ENCODE measurements at regions of chr4 and their contacts with region 1.

Region 1: DNA sequence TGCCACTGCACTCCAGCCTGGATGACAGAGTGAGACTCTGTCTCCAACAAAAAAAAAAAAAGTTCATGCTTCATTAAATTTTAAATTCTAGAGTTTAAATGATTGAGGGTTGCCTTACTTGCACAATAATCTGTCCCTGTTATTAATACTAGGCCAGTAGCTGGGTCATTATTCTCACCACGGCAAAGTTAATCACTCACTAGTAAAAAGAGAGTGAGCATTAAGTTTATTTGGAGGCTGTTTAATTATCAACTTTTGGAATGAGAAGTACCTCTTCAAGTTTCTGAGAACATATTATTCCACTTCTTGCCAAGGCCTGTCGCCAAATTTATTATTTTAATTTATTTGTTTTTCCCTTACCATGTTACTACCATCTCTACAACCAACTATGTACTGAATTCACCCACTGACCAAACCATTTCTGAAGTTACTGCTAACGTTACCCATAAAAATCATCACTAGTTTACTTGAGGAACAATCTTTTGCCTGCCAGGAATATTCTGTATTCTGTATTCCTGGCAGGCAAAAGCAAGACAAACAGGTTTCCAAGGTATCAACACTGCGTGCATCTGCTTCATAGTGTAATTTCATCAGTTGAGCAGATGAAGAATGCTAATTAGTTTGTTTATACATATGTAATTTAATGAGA is 26.5 kb downstream of the GUCY1A1 start:
- DNase-seq: no peak
- ATAC-seq: peak in 2 of 8 donors; percentile 10 to 21
- H3K4me3 ChIP-seq: no peak overlapping the region
- H3K27ac ChIP-seq: peak overlapping the region in 8 of 10 donors; percentile 34 to 68 (median 44)
- H3K4me1 ChIP-seq: peaks cover 8 to 86% (median 49%) of the 10 kb centered on the region in 9 donors
- H3K27me3 ChIP-seq: no peaks in the 10 kb centered on the region
- CTCF ChIP-seq: no peak

Region 2: DNA sequence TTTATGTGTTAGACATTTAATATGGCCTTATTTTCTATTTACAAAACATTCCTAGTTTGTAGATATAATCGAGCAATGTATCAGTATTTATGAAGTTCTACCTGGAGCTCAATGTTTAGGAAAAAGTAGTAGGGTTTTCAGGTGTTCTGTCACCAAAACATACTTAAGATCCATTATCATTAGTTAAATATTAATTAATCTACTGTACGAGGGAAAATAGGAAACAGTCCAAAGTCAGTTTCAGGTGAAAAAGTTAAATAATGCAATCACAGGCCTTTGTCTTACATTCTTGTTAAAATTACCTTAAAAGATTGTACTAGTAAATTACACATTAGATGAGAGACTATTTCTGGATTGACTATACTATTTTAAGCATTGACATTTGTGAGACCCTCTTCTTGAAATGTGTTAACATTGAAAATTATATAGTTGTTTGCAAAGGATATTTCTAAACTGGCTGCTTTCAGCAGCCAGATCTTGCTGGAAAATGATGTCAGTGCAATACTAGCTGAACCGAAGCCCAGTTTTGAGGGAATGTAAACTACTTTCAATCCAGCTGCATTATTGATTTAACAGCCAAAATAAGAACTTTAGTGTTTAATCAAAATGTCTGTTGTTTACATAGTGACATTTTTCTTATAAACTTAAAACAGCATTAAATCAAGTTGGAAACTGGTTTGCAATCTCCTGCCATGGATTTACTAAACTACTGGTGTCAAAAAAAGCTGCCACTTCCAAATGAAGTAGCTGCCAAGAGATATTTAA is 85.0 kb after region 1 on chr4:
- intact Hi-C with region 1: loop called in 1 of 10 experiments (anchors 10 kb)
- DNase-seq: no peak
- ATAC-seq: peak in 3 of 8 donors; percentile 46 to 54 (median 51)
- H3K4me3 ChIP-seq: no peak overlapping the region
- H3K27ac ChIP-seq: peak overlapping the region in 6 of 10 donors; percentile 8 to 52 (median 27)
- H3K4me1 ChIP-seq: peaks cover 0 to 29% (median 16%) of the 10 kb centered on the region in 9 donors
- H3K27me3 ChIP-seq: no peaks in the 10 kb centered on the region
- CTCF ChIP-seq: no peak

Region 3: GRCh38 chr4:155929833-155930232 is 236.7 kb after region 1 on chr4:
- intact Hi-C with region 1: no loop called
- DNase-seq: no peak
- ATAC-seq: no peak
- H3K4me3 ChIP-seq: no peak overlapping the region
- H3K27ac ChIP-seq: no peak overlapping the region
- H3K4me1 ChIP-seq: no peaks in the 10 kb centered on the region
- H3K27me3 ChIP-seq: no peaks in the 10 kb centered on the region
- CTCF ChIP-seq: no peak

Measured in heart right ventricle (tissue), 16 donors.